SK-N-SH (cell line): ENCODE measurements at regions of chr4 and their contacts with region 1.

Region 1: DNA sequence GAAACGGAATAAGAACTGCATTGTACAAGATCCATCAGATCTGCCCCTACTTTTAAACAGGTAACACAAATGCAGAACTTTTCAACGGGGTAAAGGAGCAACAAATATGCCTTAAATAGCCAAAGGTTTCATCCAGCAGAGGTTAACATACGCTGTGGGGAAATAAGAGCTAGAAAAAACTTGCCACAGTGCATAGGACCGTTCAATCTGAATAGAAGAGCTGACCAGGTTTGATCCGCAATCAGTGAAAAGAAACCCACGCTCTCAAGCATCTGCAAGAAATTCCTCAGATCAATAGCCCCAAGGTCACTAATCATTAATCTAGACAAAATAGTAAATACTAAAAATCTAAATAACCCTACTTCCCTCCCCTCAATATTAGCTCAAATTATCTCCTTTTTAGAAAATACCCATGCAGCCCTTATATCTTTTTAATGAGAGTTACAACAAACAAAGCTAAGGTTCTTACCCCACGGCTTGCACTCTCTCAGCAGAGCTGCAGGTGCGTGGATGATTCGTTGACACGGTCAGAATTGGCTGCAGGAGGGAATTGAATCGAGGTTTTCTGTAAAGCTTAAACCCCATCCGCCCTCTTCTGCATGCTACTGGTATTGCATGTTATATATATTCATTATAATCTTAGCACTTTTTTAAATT is at the start of gene TLR10:
- DNase-seq: peak; percentile 53
- H3K4me3 ChIP-seq: peak within 1 kb of the TSS in 1 of 2 experiments; percentile 26; a peak in 1 of 4 replicates
- H3K27ac ChIP-seq: no peak within 1 kb of the TSS
- H3K4me1 ChIP-seq: no peaks in the 10 kb centered on the region
- H3K27me3 ChIP-seq: peaks cover 5% of the 10 kb centered on the region; the same call in 1 of the 2 replicates
- CTCF ChIP-seq: peak; percentile 67
- EP300 ChIP-seq: no peak
- RAD21 ChIP-seq: peak; percentile 72
- polyA plus RNA-seq, gene TLR10: not detected in 2 replicates

Region 2: GRCh38 chr4:38062088-38062893 is 720.3 kb before region 1 on chr4:
- CTCF ChIA-PET with region 1: interaction called, 11 read pairs
- POLR2A ChIA-PET with region 1: no interaction called
- DNase-seq: peak; percentile 71
- H3K4me3 ChIP-seq: peak overlapping the region; percentile 17 to 49; a peak in 2 of 4 replicates
- H3K27ac ChIP-seq: peak overlapping the region; percentile 78 to 89; a peak in 3 of 4 replicates
- H3K4me1 ChIP-seq: peaks cover 11 to 35% of the 10 kb centered on the region in 2 experiments; a peak in 3 of 4 replicates
- H3K27me3 ChIP-seq: no peaks in the 10 kb centered on the region
- CTCF ChIP-seq: peak; percentile 87
- EP300 ChIP-seq: no peak
- RAD21 ChIP-seq: peak; percentile 91

Region 3: GRCh38 chr4:38710053-38710452 is 72.5 kb before region 1 on chr4:
- CTCF ChIA-PET with region 1: no interaction called
- POLR2A ChIA-PET with region 1: no interaction called
- DNase-seq: no peak
- H3K4me3 ChIP-seq: no peak overlapping the region
- H3K27ac ChIP-seq: no peak overlapping the region
- H3K4me1 ChIP-seq: no peaks in the 10 kb centered on the region
- H3K27me3 ChIP-seq: no peaks in the 10 kb centered on the region
- CTCF ChIP-seq: no peak
- EP300 ChIP-seq: no peak
- RAD21 ChIP-seq: no peak

Region 4: DNA sequence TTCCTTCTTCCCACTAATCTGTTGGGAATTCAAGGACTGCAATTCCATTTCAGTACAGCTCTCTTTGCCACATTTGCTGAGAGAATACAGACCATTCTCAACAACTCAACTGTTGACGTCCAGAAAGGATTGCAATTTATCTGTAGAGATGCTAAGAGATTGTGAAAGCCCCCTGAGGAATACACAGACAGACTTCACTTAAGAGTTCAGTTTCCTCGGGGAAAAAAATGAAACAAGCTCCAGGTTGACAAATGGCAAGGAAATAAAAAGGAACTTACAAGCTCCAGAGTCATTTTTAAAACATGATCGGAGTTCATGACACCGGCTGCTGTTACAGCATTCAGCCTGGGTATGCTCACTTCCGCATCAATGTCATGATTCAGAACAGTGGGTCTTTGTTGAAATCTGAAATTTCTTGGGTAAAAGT is 13.6 kb before region 1 on chr4:
- CTCF ChIA-PET with region 1: interaction called, 23 read pairs
- POLR2A ChIA-PET with region 1: no interaction called
- DNase-seq: no peak
- H3K4me3 ChIP-seq: no peak overlapping the region
- H3K27ac ChIP-seq: no peak overlapping the region
- H3K4me1 ChIP-seq: no peaks in the 10 kb centered on the region
- H3K27me3 ChIP-seq: no peaks in the 10 kb centered on the region; the same call in 1 of the 2 replicates
- CTCF ChIP-seq: no peak
- EP300 ChIP-seq: no peak
- RAD21 ChIP-seq: no peak

Region 5: DNA sequence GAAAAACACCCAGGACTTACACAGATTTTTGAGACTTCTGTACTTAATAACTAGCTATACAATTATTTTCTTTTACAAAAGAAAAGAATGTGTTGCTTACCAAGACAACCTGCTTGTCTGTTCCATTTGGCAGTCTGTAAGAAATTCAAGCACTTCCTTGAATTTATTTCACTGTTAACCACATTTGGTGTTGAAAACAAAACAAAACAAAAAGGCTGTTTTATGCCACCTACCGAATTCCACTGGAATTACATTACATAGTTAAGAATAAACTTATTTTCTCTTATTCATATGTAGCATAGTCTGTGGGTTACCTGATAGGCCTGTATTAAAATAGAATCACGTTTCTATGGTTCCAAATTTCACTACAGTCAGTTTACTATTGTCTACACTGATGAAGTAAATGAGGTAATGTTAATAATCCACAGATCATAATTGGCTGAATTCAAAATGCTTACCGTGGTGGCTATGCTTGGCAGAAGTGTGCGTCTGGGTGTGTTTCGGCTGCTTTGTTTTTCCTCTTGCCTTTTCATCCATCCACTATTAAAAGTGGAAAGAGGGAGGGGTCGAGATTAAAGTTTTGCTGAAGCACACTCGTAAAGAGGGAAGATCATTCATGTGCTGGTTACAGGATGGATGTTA is 22.2 kb after region 1 on chr4 and contains the start of gene TLR1:
- CTCF ChIA-PET with region 1: interaction called, 22 read pairs
- POLR2A ChIA-PET with region 1: no interaction called
- DNase-seq: peak; percentile 26
- H3K4me3 ChIP-seq: no peak within 1 kb of the TSS; a peak in 1 of 4 replicates
- H3K27ac ChIP-seq: no peak within 1 kb of the TSS
- H3K4me1 ChIP-seq: no peaks in the 10 kb centered on the region; a peak in 1 of 4 replicates
- H3K27me3 ChIP-seq: no peaks in the 10 kb centered on the region
- CTCF ChIP-seq: peak; percentile 67
- EP300 ChIP-seq: no peak
- RAD21 ChIP-seq: peak; percentile 48
- polyA plus RNA-seq, gene TLR1: 0.03 TPM in 1 of 2 replicates, not detected in the other

Region 6: DNA sequence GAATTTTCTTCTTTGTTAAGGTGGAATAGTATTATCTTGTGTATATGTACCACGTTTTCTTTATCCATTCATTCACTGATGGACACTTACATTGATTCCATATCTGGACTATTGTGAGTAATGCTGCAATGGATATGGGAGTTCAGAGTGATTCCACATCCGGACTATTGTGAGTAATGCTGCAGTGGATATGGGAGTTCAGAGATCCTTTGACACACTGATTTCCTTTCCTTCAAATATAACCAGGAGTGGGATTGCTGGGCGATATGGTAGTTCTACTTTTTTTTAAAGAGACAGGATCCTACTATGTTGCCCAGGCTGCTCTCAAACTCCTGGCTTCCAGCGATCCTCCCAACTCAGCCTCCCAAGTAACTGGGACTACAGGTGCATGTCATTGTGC is 237.6 kb after region 1 on chr4:
- CTCF ChIA-PET with region 1: no interaction called
- POLR2A ChIA-PET with region 1: no interaction called
- DNase-seq: no peak
- H3K4me3 ChIP-seq: no peak overlapping the region
- H3K27ac ChIP-seq: no peak overlapping the region
- H3K4me1 ChIP-seq: no peaks in the 10 kb centered on the region
- H3K27me3 ChIP-seq: no peaks in the 10 kb centered on the region
- CTCF ChIP-seq: no peak
- EP300 ChIP-seq: no peak
- RAD21 ChIP-seq: no peak